Left ventricle myocardium inferior (tissue), 1 donor: ENCODE measurements at regions of chr13 and their contacts with region 1.

Region 1: GRCh38 chr13:44484562-44485138 is 91.5 kb downstream of the TSC22D1 start:
- DNase-seq: no peak
- H3K4me3 ChIP-seq: peak overlapping the region; percentile 31
- H3K27ac ChIP-seq: no peak overlapping the region
- H3K4me1 ChIP-seq: peaks cover 20% of the 10 kb centered on the region
- H3K27me3 ChIP-seq: no peaks in the 10 kb centered on the region
- CTCF ChIP-seq: no peak

Region 2: GRCh38 chr13:44577236-44578066 is 92.8 kb after region 1 on chr13:
- intact Hi-C with region 1: loop called (anchors 10 kb)
- DNase-seq: peak; percentile 98
- H3K4me3 ChIP-seq: peak overlapping the region; percentile 95
- H3K27ac ChIP-seq: peak overlapping the region; percentile 98
- H3K4me1 ChIP-seq: peaks cover 56% of the 10 kb centered on the region
- H3K27me3 ChIP-seq: no peaks in the 10 kb centered on the region
- CTCF ChIP-seq: no peak

Region 3: GRCh38 chr13:44969551-44970484 is 485.2 kb after region 1 on chr13:
- intact Hi-C with region 1: loop called (anchors 5 kb)
- DNase-seq: no peak
- H3K4me3 ChIP-seq: no peak overlapping the region
- H3K27ac ChIP-seq: no peak overlapping the region
- H3K4me1 ChIP-seq: peaks cover 35% of the 10 kb centered on the region
- H3K27me3 ChIP-seq: no peaks in the 10 kb centered on the region
- CTCF ChIP-seq: peak; percentile 88